ENCODE measurements at regions of chrX and their contacts with region 1.

Region 1: DNA sequence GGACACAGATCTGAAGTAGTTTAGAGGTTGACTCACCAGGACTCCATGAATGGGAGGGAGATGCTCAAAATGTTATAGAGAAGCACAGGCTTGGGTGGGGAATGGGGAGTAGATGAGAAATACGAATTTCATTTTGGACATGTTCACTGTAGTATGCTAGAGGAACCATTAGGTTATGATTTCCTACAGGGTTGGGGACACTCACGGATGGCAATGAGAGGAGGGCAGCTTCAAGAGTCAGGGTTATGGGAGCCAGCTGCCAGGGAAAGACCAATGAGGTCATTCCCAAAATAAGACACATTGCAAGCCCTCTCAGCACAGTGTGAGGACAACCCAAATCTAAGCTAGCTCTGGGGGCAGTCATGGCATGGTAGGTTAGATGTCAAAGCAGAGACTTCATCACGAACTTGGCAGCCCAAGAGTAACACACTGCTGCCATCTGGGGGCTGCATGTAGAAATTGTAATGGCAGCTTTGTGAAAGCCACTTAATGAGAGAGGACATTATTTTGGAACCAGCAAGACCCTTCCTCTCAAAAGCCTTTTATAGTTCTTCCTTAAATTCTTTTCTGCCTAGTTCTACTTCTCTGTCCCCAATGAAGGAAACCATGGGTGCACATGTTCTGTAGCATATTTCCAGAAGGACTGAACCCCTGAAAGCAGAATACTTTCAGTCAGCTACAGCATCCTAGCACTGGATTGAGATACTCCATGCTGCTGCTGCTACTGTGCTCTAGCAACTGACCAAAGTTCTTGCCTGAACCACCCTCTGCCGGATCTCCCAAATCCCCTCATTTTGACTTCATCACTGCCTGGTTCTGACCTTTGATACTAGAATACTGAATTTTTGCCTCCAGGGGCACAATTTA is 16.2 kb upstream of the ZCCHC12 start:
- DNase-seq: peak in 3 of 5 donors; percentile 12 to 31 (median 27)
- ATAC-seq: peak; percentile 37 to 63 (median 58)
- H3K4me3 ChIP-seq: no peak overlapping the region
- H3K27ac ChIP-seq: no peak overlapping the region
- H3K4me1 ChIP-seq: no peaks in the 10 kb centered on the region
- H3K27me3 ChIP-seq: peaks cover 0 to 12% (median 0%) of the 10 kb centered on the region in 9 donors
- CTCF ChIP-seq: peak; percentile 34 to 70 (median 60)
- POLR2A ChIP-seq: no peak

Region 2: DNA sequence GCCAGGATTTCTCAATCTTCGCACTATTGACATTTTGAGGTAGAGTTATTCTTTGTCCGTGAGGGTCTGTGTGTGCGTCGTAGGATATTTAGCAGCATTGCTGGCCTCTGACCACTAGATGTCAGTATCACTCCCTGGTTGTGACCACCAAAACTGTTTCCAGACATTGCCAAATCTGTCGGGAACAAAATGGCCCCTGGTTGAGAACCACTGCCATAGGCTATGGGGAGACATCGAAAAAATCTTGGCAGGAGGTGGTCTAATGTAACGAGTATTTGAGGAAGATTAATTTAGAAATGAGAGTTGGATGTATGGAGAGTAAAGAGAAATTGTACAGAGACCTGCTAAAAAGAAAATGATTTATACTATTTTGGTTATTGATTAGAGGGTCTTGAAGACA is 203.4 kb before region 1 on chrX:
- intact Hi-C with region 1: loop called in 4 of 10 experiments (anchors 2 to 10 kb)
- DNase-seq: peak in 3 of 5 donors; percentile 10 to 38 (median 22)
- ATAC-seq: peak; percentile 37 to 77 (median 59)
- H3K4me3 ChIP-seq: peak overlapping the region in 2 of 12 donors; percentile 4 to 24
- H3K27ac ChIP-seq: peak overlapping the region in 1 of 12 donors; percentile 36
- H3K4me1 ChIP-seq: peaks cover 0 to 4% (median 0%) of the 10 kb centered on the region in 12 donors
- H3K27me3 ChIP-seq: peaks cover 0 to 5% (median 0%) of the 10 kb centered on the region in 9 donors
- CTCF ChIP-seq: peak; percentile 62 to 81 (median 73)
- POLR2A ChIP-seq: no peak

Region 3: GRCh38 chrX:118627084-118627758 is 180.2 kb before region 1 on chrX:
- intact Hi-C with region 1: loop called in 2 of 10 experiments (anchors 5 kb)
- DNase-seq: no peak
- ATAC-seq: no peak
- H3K4me3 ChIP-seq: no peak overlapping the region
- H3K27ac ChIP-seq: no peak overlapping the region
- H3K4me1 ChIP-seq: no peaks in the 10 kb centered on the region
- H3K27me3 ChIP-seq: peaks cover 0 to 4% (median 0%) of the 10 kb centered on the region in 9 donors
- CTCF ChIP-seq: peak in 4 of 12 donors; percentile 30 to 36 (median 34)
- POLR2A ChIP-seq: no peak

Region 4: DNA sequence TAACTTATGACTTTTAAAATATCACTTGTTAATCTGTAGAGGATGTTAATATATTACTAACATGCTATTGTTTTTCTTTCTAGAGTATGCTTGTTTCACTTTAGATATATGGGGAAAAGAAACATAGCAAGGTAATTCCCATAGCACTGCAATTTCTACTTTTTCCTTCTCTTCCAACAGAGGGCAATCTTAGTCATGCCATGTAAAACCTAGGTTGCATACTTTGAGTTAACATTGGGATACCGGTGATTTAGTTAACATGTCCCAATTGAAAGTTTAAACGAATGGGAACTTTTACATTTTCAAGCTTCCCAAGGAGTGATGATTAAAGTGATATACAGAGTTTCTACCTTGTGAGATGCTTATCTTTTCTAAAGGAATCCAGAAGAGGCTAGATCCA is 169.4 kb before region 1 on chrX:
- intact Hi-C with region 1: loop called in 8 of 10 experiments (anchors 2 to 5 kb)
- DNase-seq: no peak
- ATAC-seq: no peak
- H3K4me3 ChIP-seq: no peak overlapping the region
- H3K27ac ChIP-seq: no peak overlapping the region
- H3K4me1 ChIP-seq: no peaks in the 10 kb centered on the region
- H3K27me3 ChIP-seq: peaks cover 0 to 2% (median 0%) of the 10 kb centered on the region in 9 donors
- CTCF ChIP-seq: peak in 4 of 12 donors; percentile 9 to 28 (median 19)
- POLR2A ChIP-seq: no peak

Region 5: GRCh38 chrX:118644378-118644777 is 163.0 kb before region 1 on chrX:
- intact Hi-C with region 1: loop called in 9 of 10 experiments (anchors 2 to 5 kb)
- DNase-seq: no peak
- ATAC-seq: no peak
- H3K4me3 ChIP-seq: no peak overlapping the region
- H3K27ac ChIP-seq: no peak overlapping the region
- H3K4me1 ChIP-seq: no peaks in the 10 kb centered on the region
- H3K27me3 ChIP-seq: peaks cover 0 to 2% (median 0%) of the 10 kb centered on the region in 9 donors
- CTCF ChIP-seq: peak in 10 of 12 donors; percentile 16 to 54 (median 37)
- POLR2A ChIP-seq: no peak